Head of caudate nucleus (tissue), 42 donors: ENCODE measurements at regions of chr2 and their contacts with region 1.

Region 1: GRCh38 chr2:71596011-71596410 is 142.7 kb downstream of the DYSF start:
- DNase-seq: peak; percentile 85 to 98 (median 94)

Region 2: GRCh38 chr2:71064110-71064611 is 531.9 kb before region 1 on chr2:
- intact Hi-C with region 1: no loop called
- DNase-seq: no peak

Region 3: GRCh38 chr2:71576541-71576940 is 19.5 kb before region 1 on chr2:
- intact Hi-C with region 1: loop called (anchors 1 kb)
- DNase-seq: peak; percentile 23 to 91 (median 76)